Ascending aorta (tissue), 2 donors: ENCODE measurements at regions of chr4 and their contacts with region 1.

Region 1: DNA sequence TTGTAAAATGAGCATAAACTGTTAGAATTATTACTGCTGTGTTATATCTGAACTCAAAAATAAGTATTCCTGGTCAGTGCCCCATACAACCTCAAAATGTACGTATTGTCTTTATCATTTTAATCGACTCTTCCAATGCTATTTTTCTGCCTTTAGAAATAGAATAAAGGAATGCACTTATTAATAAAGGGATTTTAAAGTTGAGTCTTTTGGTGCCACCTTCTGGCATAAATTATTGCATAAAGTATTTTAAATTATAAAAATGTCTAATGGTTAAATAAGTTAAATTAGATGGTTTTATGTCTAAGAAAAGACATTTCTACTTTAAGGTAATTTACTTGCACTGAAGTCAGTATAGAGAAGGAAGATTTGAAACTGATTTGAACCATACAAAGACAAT is 424.0 kb upstream of the NDST4 start:
- DNase-seq: no peak
- H3K4me3 ChIP-seq: no peak overlapping the region
- H3K27ac ChIP-seq: no peak overlapping the region
- H3K4me1 ChIP-seq: no peaks in the 10 kb centered on the region
- H3K27me3 ChIP-seq: no peaks in the 10 kb centered on the region
- CTCF ChIP-seq: peak in 1 of 3 experiments; percentile 5

Region 2: DNA sequence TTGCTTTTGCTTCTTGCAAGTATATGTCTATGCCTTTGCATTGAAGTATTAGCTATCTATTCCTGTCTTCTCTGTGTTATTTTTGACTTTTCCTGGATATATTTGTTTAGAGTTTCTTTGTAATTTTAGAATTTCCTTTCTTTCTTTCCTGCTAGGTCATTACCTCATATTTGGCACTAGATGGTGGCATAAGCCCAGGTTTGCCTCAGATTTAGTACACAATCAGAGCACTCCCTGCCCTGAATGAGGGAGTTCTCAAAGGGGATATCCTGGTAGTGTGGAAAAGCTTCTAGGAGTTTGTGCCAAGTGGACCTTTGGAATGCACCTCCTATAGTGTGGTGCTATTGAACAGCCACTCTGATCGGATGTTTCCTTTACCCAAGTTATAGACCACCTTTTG is 757.2 kb before region 1 on chr4:
- intact Hi-C with region 1: loop called (anchors 5 kb)
- DNase-seq: no peak
- H3K4me3 ChIP-seq: no peak overlapping the region
- H3K27ac ChIP-seq: no peak overlapping the region
- H3K4me1 ChIP-seq: no peaks in the 10 kb centered on the region
- H3K27me3 ChIP-seq: no peaks in the 10 kb centered on the region
- CTCF ChIP-seq: peak in 1 of 3 experiments; percentile 18

Region 3: DNA sequence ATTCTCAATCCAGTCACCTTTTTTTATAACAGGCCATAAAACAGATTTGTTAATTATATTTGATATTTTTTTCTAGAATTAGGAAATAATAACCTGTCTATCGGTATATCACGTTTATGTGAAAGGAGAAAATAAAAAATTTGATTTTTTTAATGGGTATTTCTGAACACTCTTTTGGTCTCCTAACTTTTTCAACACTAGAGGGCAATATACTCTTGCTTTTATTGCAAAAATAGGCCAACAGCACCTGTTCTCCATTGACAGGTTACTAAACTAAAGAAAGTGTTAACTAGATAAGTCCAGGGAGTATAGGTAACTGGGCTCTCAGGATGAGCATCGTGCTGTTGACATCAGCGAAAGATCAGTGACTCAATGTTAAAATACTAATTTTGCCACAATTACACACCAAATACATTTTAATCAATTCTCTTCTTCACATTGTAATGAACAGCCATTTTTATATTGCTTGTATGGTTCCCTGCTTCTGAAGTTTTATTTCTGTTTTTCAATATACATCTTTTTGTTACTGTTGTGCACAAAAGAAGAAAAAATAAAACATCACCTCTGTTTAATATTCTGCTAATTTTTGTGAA is 446.8 kb before region 1 on chr4:
- intact Hi-C with region 1: loop called (anchors 5 kb)
- DNase-seq: no peak
- H3K4me3 ChIP-seq: no peak overlapping the region
- H3K27ac ChIP-seq: no peak overlapping the region
- H3K4me1 ChIP-seq: no peaks in the 10 kb centered on the region
- H3K27me3 ChIP-seq: no peaks in the 10 kb centered on the region
- CTCF ChIP-seq: peak in 2 of 3 experiments; percentile 18 to 43

Region 4: DNA sequence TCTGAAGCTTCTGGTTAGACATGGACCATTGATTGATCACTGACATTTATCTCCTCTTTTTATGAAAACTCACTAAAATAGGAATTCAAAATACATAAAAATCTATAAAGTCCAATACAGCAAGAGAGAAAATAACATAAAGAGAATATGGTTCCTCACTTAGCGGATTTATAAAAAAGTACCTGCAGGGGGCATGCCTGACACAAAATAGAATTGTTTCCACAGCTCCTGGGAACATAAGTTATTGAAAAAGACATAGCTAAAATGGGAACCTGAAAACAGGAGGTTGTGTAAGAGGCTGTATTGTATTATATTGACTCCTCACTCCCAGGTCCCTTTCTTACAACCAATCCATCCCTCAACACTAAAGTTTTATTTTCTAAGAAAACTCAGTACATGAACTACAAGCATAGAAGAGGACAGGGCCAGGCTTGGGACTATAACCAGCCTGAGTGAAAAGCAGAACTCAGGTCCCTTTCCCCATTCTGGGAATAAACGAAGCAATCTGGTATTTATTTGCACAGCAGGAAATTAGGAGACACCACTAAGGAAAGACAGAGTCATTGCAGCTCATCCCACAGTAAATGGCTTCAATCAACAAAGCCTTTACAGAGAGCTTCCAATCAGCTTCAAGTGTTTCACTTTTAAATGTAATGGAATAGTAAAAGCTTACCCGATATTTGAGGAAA is 302.8 kb before region 1 on chr4:
- intact Hi-C with region 1: loop called (anchors 10 kb)
- DNase-seq: no peak
- H3K4me3 ChIP-seq: no peak overlapping the region
- H3K27ac ChIP-seq: no peak overlapping the region
- H3K4me1 ChIP-seq: no peaks in the 10 kb centered on the region
- H3K27me3 ChIP-seq: no peaks in the 10 kb centered on the region
- CTCF ChIP-seq: peak in 2 of 3 experiments; percentile 6 to 28

Region 5: DNA sequence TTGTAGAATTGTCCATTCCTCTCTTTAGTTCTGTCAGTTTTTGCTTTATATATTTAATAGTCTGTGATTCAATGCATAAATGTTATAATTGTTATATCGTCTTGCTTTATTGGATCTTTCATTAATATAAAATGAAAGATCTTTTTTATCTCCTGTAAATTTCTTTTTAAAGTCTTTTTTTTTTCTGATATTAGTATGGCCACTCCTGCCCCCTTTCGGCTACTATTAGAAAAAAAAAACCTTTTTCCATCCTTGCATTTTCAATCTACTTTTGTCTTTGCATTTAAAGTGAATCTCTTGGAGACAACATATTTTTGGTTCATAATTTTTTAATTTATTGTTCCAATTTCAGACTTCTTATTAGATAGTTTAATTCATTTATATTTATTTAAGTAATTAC is 253.4 kb after region 1 on chr4:
- intact Hi-C with region 1: no loop called
- DNase-seq: no peak
- H3K4me3 ChIP-seq: no peak overlapping the region
- H3K27ac ChIP-seq: no peak overlapping the region
- H3K4me1 ChIP-seq: no peaks in the 10 kb centered on the region
- H3K27me3 ChIP-seq: no peaks in the 10 kb centered on the region
- CTCF ChIP-seq: no peak